ENCODE measurements at regions of chr5 and their contacts with region 1.

Region 1: DNA sequence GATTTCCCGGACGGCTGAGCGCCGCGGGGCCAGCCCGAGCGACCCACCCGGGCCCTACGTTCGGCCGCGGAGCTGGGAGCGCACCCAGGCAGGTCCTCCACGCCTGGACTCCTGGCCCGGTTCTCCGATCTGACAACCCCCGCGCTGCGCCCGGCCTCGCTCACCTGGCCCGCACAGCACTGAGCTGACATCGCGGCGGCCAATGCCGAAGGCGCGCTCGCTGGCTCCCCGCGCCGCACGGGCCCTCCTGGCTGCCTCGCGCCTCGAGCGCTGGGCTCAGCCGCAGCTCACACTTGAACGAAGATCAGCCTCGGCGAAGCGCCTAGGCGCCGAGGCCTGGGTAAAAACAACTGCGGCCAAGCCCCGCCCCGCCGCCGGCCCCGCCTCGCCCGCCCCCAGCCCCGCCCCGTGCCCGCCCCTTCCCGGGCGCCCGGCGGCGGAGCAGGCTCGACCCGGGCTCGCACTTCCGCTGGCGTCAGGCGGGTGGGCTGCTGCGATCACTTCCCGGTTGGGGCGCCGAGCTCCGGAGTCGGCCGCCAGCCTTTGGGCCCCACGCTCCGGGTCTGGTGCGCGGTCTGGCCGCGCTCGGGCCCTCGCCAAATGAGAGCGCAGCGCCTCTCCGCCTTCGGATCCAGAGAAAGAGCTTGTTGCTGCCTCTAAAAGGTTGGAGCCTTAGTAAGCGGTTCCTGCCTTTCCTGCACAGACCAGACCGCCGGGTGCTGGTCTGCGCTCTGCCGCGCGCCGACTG is at the start of gene SERINC5:
- DNase-seq: peak; percentile 81 to 82
- H3K4me3 ChIP-seq: peak within 1 kb of the TSS; percentile 16 to 84 (median 68)
- H3K27ac ChIP-seq: peak within 1 kb of the TSS; percentile 99
- H3K4me1 ChIP-seq: peaks cover 17 to 28% of the 10 kb centered on the region in 2 donors
- H3K27me3 ChIP-seq: no peaks in the 10 kb centered on the region
- CTCF ChIP-seq: no peak
- POLR2A ChIP-seq: peak; percentile 93
- total RNA-seq, gene SERINC5: 22.6 to 26.9 (median 24.8) TPM

Region 2: GRCh38 chr5:80172067-80172695 is 83.7 kb before region 1 on chr5:
- intact Hi-C with region 1: loop called (anchors 10 kb)
- DNase-seq: no peak
- H3K4me3 ChIP-seq: no peak overlapping the region
- H3K27ac ChIP-seq: no peak overlapping the region
- H3K4me1 ChIP-seq: no peaks in the 10 kb centered on the region
- H3K27me3 ChIP-seq: no peaks in the 10 kb centered on the region
- CTCF ChIP-seq: no peak
- POLR2A ChIP-seq: no peak

Region 3: GRCh38 chr5:80346055-80346454 is 90.1 kb after region 1 on chr5:
- intact Hi-C with region 1: no loop called
- DNase-seq: peak; percentile 43
- H3K4me3 ChIP-seq: no peak overlapping the region
- H3K27ac ChIP-seq: no peak overlapping the region
- H3K4me1 ChIP-seq: no peaks in the 10 kb centered on the region
- H3K27me3 ChIP-seq: no peaks in the 10 kb centered on the region
- CTCF ChIP-seq: peak in 3 of 6 experiments; percentile 28 to 45 (median 40)
- POLR2A ChIP-seq: no peak